ENCODE measurements at regions of chr3 and their contacts with region 1.

Region 1: GRCh38 chr3:179083977-179084376 is 12.4 kb upstream of the ZMAT3 start:
- DNase-seq: no peak
- ATAC-seq: peak; percentile 72
- H3K4me3 ChIP-seq: no peak overlapping the region
- H3K27ac ChIP-seq: peak overlapping the region; percentile 31; the same call in 1 of the 2 replicates
- H3K4me1 ChIP-seq: peaks cover 6% of the 10 kb centered on the region; the same call in 1 of the 2 replicates
- H3K27me3 ChIP-seq: no peaks in the 10 kb centered on the region
- CTCF ChIP-seq: no peak
- EP300 ChIP-seq: no peak
- POLR2A ChIP-seq: no peak
- RAD21 ChIP-seq: no peak

Region 2: DNA sequence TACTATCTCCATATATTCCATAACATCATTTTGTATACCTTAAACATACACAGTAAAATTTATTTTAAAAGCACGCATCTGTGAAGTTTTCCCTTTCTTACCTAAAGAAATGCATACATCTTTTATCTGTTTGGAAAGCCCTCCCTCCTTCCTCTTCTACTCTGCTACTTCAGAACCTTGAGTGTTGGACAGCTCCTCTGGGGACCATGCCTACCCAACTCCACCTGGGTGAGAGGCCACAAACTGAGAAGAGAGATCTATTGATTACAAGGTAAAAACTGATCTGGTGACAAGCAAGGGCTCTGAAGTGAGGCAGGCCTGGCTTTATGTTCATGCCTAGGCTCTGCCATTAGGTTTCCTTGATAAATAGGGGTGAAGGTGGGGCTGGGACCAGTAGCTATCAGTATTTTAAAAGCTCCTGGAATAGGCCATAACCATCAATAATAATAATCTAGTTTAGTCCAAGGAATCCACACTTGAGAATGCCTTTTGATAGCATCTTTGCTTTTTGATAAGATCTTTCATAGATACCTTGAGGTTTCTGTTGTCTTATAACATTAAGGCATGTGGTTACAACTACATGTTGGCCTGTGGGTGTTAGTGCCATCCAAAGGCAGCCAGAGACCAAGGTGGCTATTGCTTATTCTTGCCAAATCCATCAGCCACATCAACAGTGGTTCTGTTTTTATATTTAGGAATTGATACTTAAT is 398.9 kb before region 1 on chr3:
- CTCF ChIA-PET with region 1: no interaction called
- POLR2A ChIA-PET with region 1: no interaction called
- RAD21 ChIA-PET with region 1: no interaction called
- SMC1A ChIA-PET with region 1: no interaction called
- in situ Hi-C with region 1: no loop called
- intact Hi-C with region 1: no loop called
- DNase-seq: no peak
- ATAC-seq: peak; percentile 68
- H3K4me3 ChIP-seq: no peak overlapping the region
- H3K27ac ChIP-seq: no peak overlapping the region
- H3K4me1 ChIP-seq: no peaks in the 10 kb centered on the region
- H3K27me3 ChIP-seq: no peaks in the 10 kb centered on the region
- CTCF ChIP-seq: no peak
- EP300 ChIP-seq: no peak
- POLR2A ChIP-seq: no peak
- RAD21 ChIP-seq: no peak

Region 3: GRCh38 chr3:179027326-179027900 is 56.6 kb before region 1 on chr3:
- CTCF ChIA-PET with region 1: no interaction called
- POLR2A ChIA-PET with region 1: no interaction called
- RAD21 ChIA-PET with region 1: no interaction called
- SMC1A ChIA-PET with region 1: no interaction called
- in situ Hi-C with region 1: no loop called
- intact Hi-C with region 1: no loop called
- DNase-seq: no peak
- ATAC-seq: no peak
- H3K4me3 ChIP-seq: no peak overlapping the region
- H3K27ac ChIP-seq: no peak overlapping the region
- H3K4me1 ChIP-seq: no peaks in the 10 kb centered on the region
- H3K27me3 ChIP-seq: no peaks in the 10 kb centered on the region
- CTCF ChIP-seq: no peak
- EP300 ChIP-seq: no peak
- POLR2A ChIP-seq: no peak
- RAD21 ChIP-seq: no peak

Region 4: GRCh38 chr3:179098388-179099077 is 14.6 kb after region 1 on chr3:
- CTCF ChIA-PET with region 1: interaction called, 9 read pairs
- POLR2A ChIA-PET with region 1: interaction called, 3 read pairs
- RAD21 ChIA-PET with region 1: no interaction called
- SMC1A ChIA-PET with region 1: interaction called, 16 read pairs
- in situ Hi-C with region 1: no loop called
- intact Hi-C with region 1: no loop called
- DNase-seq: no peak
- ATAC-seq: peak; percentile 21; the same call in 2 of the 3 replicates
- H3K4me3 ChIP-seq: no peak overlapping the region
- H3K27ac ChIP-seq: no peak overlapping the region
- H3K4me1 ChIP-seq: no peaks in the 10 kb centered on the region
- H3K27me3 ChIP-seq: no peaks in the 10 kb centered on the region
- CTCF ChIP-seq: no peak
- EP300 ChIP-seq: no peak
- POLR2A ChIP-seq: no peak
- RAD21 ChIP-seq: peak; percentile 6; the same call in 1 of the 2 replicates

Measured in GM12878 (cell line).